Sigmoid colon (tissue), 7 donors: ENCODE measurements at regions of chr18 and their contacts with region 1.

Region 1: GRCh38 chr18:48445540-48445939 is 36.4 kb upstream of the ZBTB7C start:
- DNase-seq: peak; percentile 77
- H3K4me3 ChIP-seq: no peak overlapping the region
- H3K27ac ChIP-seq: no peak overlapping the region
- H3K4me1 ChIP-seq: peaks cover 0 to 13% (median 3%) of the 10 kb centered on the region in 4 donors
- H3K27me3 ChIP-seq: no peaks in the 10 kb centered on the region
- CTCF ChIP-seq: peak in 3 of 4 experiments; percentile 59 to 74 (median 69)
- EP300 ChIP-seq: no peak
- POLR2A ChIP-seq: no peak

Region 2: GRCh38 chr18:48030616-48031480 is 414.7 kb before region 1 on chr18:
- intact Hi-C with region 1: loop called (anchors 2 kb)
- DNase-seq: peak; percentile 65
- H3K4me3 ChIP-seq: no peak overlapping the region
- H3K27ac ChIP-seq: no peak overlapping the region
- H3K4me1 ChIP-seq: peaks cover 0 to 8% (median 0%) of the 10 kb centered on the region in 4 donors
- H3K27me3 ChIP-seq: no peaks in the 10 kb centered on the region
- CTCF ChIP-seq: peak in 3 of 4 experiments; percentile 66 to 68 (median 67)
- EP300 ChIP-seq: no peak
- POLR2A ChIP-seq: no peak

Region 3: DNA sequence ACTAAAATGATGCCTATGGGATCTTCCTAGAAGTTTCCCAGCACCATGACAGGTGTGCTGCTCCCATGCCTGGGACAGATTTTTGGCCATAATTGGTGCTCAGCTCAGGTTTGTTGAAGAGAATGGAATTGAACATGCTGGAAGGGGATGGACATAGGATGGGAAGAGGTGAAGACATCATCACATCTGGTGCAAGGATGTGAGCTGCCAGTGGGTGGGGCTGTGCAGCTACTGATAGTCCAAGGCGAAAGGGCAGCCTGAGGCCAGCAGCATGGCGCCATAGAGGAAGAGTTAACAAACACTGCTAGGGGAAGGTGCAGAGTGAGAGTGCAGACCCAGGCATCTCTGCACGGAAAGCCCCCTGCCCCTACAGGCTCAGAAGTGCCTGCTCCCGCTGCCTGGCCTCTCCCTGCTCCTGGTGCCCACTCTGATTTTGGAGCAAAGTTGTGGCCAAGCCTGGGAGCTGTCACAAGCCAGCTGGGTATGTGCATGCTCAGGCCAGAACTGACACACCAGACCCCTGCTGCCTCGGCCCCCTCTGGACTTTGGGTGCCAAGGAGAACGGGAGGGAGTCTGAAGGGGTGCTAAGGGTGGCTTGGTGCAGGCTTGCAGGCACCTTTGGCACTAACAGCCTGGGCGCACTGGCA is 214.9 kb before region 1 on chr18:
- intact Hi-C with region 1: loop called (anchors 1 kb)
- DNase-seq: no peak
- H3K4me3 ChIP-seq: no peak overlapping the region
- H3K27ac ChIP-seq: no peak overlapping the region
- H3K4me1 ChIP-seq: no peaks in the 10 kb centered on the region
- H3K27me3 ChIP-seq: no peaks in the 10 kb centered on the region
- CTCF ChIP-seq: peak in 2 of 4 experiments; percentile 21 to 41
- EP300 ChIP-seq: no peak
- POLR2A ChIP-seq: no peak

Region 4: DNA sequence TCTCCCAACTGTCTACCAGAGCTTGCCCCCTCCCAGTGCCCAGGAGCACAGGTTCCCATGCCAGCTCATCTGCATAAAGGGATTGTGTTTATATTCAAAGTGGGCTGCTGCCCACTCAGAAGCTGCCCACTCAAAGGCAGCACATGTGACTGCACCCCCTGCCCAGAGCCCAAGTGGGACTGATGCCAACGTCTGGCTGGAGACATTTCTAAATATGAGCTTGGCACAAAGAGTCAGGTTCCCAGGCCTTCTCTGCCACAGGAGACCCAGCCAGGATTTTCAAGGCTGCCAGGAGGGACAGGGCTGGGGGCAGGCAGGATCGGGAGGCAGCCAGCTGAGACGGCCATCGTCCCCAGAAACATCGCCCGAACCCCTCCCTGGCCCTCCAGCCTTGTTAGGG is 103.4 kb before region 1 on chr18:
- intact Hi-C with region 1: loop called (anchors 5 kb)
- DNase-seq: no peak
- H3K4me3 ChIP-seq: no peak overlapping the region
- H3K27ac ChIP-seq: peak overlapping the region in 3 of 4 donors; percentile 20 to 74 (median 45)
- H3K4me1 ChIP-seq: peaks cover 0 to 15% (median 12%) of the 10 kb centered on the region in 4 donors
- H3K27me3 ChIP-seq: no peaks in the 10 kb centered on the region
- CTCF ChIP-seq: no peak
- EP300 ChIP-seq: no peak
- POLR2A ChIP-seq: no peak